Activated naive CD4-positive, alpha-beta T cell treated with anti-CD3 and anti-CD28 coated beads for 36 hours (primary cell): ENCODE measurements at regions of chr20 and their contacts with region 1.

Region 1: GRCh38 chr20:59560588-59561227 is 43.6 kb upstream of the PHACTR3 start:
- DNase-seq: no peak
- H3K4me3 Mint-ChIP-seq: no peak overlapping the region
- H3K27ac Mint-ChIP-seq: no peak overlapping the region
- H3K4me1 Mint-ChIP-seq: no peaks in the 10 kb centered on the region
- H3K27me3 Mint-ChIP-seq: no peaks in the 10 kb centered on the region

Region 2: DNA sequence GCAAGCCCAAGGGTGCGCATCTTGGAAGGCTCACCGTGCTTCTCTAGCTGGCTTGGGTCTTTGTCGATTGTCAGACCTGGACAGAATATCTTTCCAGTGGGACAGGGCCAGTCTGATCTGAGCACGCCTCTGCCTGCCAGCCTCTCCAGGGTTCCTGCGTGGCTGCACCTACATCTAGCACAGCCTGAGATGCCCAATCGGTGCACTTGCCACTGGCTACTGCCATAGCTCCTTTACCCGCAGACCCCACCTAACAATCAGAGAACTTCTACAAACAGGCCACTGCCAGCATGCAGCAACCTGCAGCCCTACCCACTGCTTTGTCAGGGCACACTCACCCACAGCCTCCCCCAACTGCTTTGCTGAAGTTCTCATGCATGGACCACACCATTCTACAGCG is 13.1 kb before region 1 on chr20:
- CTCF ChIA-PET with region 1: interaction called, 11 read pairs
- intact Hi-C with region 1: no loop called
- DNase-seq: no peak
- H3K4me3 Mint-ChIP-seq: no peak overlapping the region
- H3K27ac Mint-ChIP-seq: no peak overlapping the region
- H3K4me1 Mint-ChIP-seq: no peaks in the 10 kb centered on the region
- H3K27me3 Mint-ChIP-seq: peaks cover 23% of the 10 kb centered on the region